SK-N-SH (cell line): ENCODE measurements at regions of chr15 and their contacts with region 1.

Region 1: DNA sequence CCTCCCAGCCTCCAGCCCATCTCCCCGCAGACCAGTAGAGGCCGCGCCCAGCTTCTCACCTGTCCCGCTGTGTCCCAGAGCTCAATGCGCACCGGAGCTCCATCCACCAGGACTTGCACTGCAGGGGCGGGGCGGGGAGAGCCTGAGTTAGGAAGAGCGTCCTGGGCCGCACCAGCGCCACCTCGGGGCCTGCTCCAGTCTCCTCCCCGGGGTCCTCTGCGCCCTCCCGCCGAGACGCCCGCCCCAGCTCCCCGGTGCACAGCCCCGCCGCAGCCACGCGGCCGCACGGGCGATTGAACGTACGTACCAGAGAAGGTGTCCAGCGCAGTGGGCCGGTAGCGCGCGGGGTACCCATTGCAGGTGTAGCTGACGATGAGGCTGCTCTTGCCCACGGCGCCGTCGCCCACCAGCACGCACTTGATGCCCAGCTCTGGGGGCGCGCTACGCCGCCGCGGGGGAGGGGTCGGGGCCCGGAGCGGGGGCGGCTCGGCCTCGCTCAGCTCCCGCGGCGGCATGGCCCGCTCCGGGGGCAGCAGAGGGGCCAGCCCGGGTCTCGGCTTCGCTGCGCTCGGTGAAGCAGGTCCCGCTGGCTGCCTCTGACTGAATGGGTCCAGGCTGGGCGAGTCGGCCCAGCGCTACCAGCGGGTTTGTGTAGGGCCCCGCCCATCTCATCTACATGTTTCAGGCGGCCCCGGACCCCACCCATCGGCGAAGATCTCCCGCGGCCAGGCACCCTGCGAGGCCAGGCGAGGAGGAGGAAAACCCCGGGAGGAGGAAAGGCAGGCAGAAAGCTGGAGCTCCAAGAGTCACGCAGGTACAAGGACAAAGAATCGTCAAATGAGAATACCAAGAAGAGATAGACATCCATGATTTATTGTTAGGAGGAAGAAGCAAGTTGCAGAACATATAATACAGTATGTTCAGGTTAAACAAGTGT is at the start of gene RHOV:
- DNase-seq: peak; percentile 92
- H3K4me3 ChIP-seq: peak within 1 kb of the TSS; percentile 52 to 63
- H3K27ac ChIP-seq: no peak within 1 kb of the TSS
- H3K4me1 ChIP-seq: no peaks in the 10 kb centered on the region; a peak in 1 of 4 replicates
- H3K27me3 ChIP-seq: no peaks in the 10 kb centered on the region
- CTCF ChIP-seq: peak; percentile 47
- EP300 ChIP-seq: no peak
- RAD21 ChIP-seq: 0 out of 2 replicates have a peak, but pooled peaks have one; percentile 16
- polyA plus RNA-seq, gene RHOV: 0.49 and 0.62 TPM in 2 replicates

Region 2: DNA sequence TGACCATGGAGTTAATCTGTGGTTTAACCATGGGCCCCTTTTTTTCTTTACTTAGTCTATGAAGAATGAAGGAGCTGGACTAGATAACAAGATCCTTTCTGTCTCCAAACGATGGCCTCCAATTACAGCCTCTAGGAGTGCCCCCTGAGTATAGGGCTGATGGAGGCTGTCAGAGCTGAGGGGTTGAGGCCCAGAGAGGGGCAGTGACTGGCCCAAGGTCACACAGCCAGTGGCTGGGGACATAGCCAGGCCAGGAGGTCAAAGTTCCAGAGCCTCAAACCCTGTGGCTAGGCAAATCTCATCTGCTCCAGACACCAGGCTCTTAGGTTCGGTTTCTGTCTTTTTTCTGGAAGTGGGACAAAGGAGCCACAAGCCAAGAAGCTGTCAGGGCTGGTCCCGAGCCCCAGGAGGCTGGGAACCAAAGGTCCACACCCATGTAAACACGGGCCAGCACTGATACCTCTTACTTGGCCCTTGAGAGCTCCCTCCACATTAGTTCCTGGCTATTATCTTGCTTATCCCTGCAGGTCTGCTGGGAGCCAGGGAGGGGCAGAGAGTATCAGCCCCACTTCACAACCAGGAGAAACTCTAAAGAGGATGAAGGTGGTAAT is 10.1 kb before region 1 on chr15:
- CTCF ChIA-PET with region 1: no interaction called
- POLR2A ChIA-PET with region 1: no interaction called
- DNase-seq: no peak
- H3K4me3 ChIP-seq: no peak overlapping the region
- H3K27ac ChIP-seq: no peak overlapping the region
- H3K4me1 ChIP-seq: peaks cover 6 to 7% of the 10 kb centered on the region in 2 experiments; a peak in 3 of 4 replicates
- H3K27me3 ChIP-seq: no peaks in the 10 kb centered on the region
- CTCF ChIP-seq: no peak
- EP300 ChIP-seq: no peak
- RAD21 ChIP-seq: no peak

Region 3: DNA sequence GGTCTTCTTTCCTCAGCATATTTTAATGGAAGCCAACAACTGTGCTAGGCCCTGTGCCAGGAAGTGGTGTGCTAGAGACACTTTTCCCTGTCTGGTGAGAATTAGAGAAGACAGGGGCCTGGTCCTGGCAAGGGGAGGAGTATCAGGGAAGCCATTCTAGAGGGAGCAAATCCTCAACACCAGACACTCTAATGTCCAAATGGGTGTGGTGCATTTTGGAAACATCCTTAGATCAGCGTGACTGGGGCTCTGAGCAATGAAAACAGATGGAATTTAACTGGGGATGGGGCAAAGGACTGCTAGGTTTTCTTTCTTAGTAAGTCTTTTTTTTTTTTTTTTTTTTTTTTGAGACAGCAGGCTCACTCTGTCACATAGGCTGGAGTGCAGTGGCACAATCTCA is 12.7 kb after region 1 on chr15:
- CTCF ChIA-PET with region 1: interaction called, 56 read pairs
- POLR2A ChIA-PET with region 1: interaction called, 7 read pairs
- DNase-seq: no peak
- H3K4me3 ChIP-seq: no peak overlapping the region
- H3K27ac ChIP-seq: no peak overlapping the region
- H3K4me1 ChIP-seq: no peaks in the 10 kb centered on the region
- H3K27me3 ChIP-seq: no peaks in the 10 kb centered on the region
- CTCF ChIP-seq: no peak
- EP300 ChIP-seq: no peak
- RAD21 ChIP-seq: no peak

Region 4: DNA sequence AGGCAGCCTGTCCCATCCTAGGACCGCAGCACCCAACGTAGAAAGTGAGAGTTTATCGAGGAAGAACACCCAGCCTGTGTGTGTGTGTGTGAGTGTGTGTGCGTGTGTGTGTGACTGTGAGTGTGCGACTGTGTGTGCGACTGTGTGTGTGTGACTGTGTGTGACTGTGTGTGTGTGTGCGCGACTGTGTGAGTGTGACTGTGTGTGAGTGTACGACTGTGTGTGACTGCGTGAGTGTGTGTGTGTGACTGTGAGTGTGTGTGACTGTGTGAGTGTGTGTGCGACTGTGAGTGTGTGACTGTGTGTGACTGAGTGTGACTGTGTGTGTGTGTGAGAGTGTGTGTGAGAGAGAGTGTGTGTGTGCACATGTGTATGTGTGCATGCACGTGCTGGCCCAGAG is 40.1 kb after region 1 on chr15:
- CTCF ChIA-PET with region 1: no interaction called
- POLR2A ChIA-PET with region 1: no interaction called
- DNase-seq: no peak
- H3K4me3 ChIP-seq: no peak overlapping the region
- H3K27ac ChIP-seq: no peak overlapping the region
- H3K4me1 ChIP-seq: peaks cover 0 to 21% of the 10 kb centered on the region in 2 experiments; a peak in 1 of 4 replicates
- H3K27me3 ChIP-seq: no peaks in the 10 kb centered on the region
- CTCF ChIP-seq: no peak
- EP300 ChIP-seq: no peak
- RAD21 ChIP-seq: no peak